H1 (cell line): ENCODE measurements at regions of chr15 and their contacts with region 1.

Region 1: GRCh38 chr15:51192521-51193280 is 98.0 kb upstream of the TNFAIP8L3 start:
- DNase-seq: peak; percentile 87 to 100
- H3K4me3 ChIP-seq: no peak overlapping the region
- H3K27ac ChIP-seq: no peak overlapping the region
- H3K4me1 ChIP-seq: no peaks in the 10 kb centered on the region
- H3K27me3 ChIP-seq: no peaks in the 10 kb centered on the region
- CTCF ChIP-seq: peak; percentile 80 to 92 (median 88)
- EP300 ChIP-seq: no peak
- POLR2A ChIP-seq: no peak
- RAD21 ChIP-seq: peak; percentile 78 to 81

Region 2: GRCh38 chr15:51172193-51172592 is 20.5 kb before region 1 on chr15:
- CTCF ChIA-PET with region 1: interaction called, 16 read pairs
- POLR2A ChIA-PET with region 1: interaction called, 3 read pairs
- DNase-seq: no peak
- H3K4me3 ChIP-seq: no peak overlapping the region
- H3K27ac ChIP-seq: no peak overlapping the region
- H3K4me1 ChIP-seq: no peaks in the 10 kb centered on the region
- H3K27me3 ChIP-seq: no peaks in the 10 kb centered on the region
- CTCF ChIP-seq: no peak
- EP300 ChIP-seq: no peak
- POLR2A ChIP-seq: no peak
- RAD21 ChIP-seq: no peak

Region 3: GRCh38 chr15:51203797-51204196 is 11.1 kb after region 1 on chr15:
- CTCF ChIA-PET with region 1: interaction called, 17 read pairs
- POLR2A ChIA-PET with region 1: no interaction called
- DNase-seq: no peak
- H3K4me3 ChIP-seq: no peak overlapping the region
- H3K27ac ChIP-seq: no peak overlapping the region
- H3K4me1 ChIP-seq: no peaks in the 10 kb centered on the region
- H3K27me3 ChIP-seq: no peaks in the 10 kb centered on the region
- CTCF ChIP-seq: no peak
- EP300 ChIP-seq: no peak
- POLR2A ChIP-seq: no peak
- RAD21 ChIP-seq: no peak

Region 4: DNA sequence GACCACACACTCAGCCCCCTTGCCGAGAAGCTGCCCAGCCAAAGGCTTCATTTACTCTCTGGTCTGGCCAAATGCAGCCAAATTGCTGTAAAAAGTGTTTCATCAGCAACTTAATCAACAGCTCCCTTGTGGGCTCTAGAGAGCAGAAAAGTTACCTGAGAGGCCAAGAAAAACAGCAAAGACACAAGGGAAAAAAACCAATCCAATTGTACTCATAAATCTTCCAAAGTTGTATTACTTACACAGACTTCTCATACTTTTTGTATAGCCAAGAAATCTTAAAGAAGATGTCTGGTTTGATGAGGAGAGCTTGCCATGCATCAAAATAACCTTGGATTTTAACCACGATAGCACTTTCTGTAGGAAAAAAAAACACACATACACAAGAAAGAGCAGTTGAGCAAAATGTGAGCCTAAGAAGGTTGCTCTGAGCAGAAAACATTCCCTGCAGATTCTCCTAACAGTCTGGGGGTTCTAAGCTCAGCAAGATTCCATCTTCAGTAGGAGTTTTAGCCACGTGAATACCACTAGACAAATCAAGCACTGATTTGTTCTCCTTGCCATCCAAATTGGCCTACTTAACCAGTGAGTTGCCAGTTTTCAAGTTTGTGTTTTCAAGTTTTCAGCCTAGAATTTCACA is 25.7 kb after region 1 on chr15:
- CTCF ChIA-PET with region 1: interaction called, 13 read pairs
- POLR2A ChIA-PET with region 1: no interaction called
- DNase-seq: no peak
- H3K4me3 ChIP-seq: no peak overlapping the region
- H3K27ac ChIP-seq: no peak overlapping the region
- H3K4me1 ChIP-seq: no peaks in the 10 kb centered on the region
- H3K27me3 ChIP-seq: no peaks in the 10 kb centered on the region
- CTCF ChIP-seq: no peak
- EP300 ChIP-seq: no peak
- POLR2A ChIP-seq: no peak
- RAD21 ChIP-seq: no peak

Region 5: GRCh38 chr15:51438526-51438925 is 245.8 kb after region 1 on chr15:
- CTCF ChIA-PET with region 1: no interaction called
- POLR2A ChIA-PET with region 1: no interaction called
- DNase-seq: no peak
- H3K4me3 ChIP-seq: no peak overlapping the region
- H3K27ac ChIP-seq: no peak overlapping the region
- H3K4me1 ChIP-seq: no peaks in the 10 kb centered on the region
- H3K27me3 ChIP-seq: no peaks in the 10 kb centered on the region
- CTCF ChIP-seq: no peak
- EP300 ChIP-seq: no peak
- POLR2A ChIP-seq: no peak
- RAD21 ChIP-seq: no peak